Motor neuron (in vitro differentiated cells): ENCODE measurements at regions of chr3 and their contacts with region 1.

Region 1: GRCh38 chr3:18988614-18989229 is 159.6 kb upstream of the KCNH8 start:
- ATAC-seq: peak in 6 of 8 experiments; percentile 35 to 63 (median 48)
- H3K4me3 ChIP-seq: no peak overlapping the region
- H3K27ac ChIP-seq: no peak overlapping the region
- H3K4me1 ChIP-seq: peaks cover 0 to 14% of the 10 kb centered on the region in 2 donors

Region 2: DNA sequence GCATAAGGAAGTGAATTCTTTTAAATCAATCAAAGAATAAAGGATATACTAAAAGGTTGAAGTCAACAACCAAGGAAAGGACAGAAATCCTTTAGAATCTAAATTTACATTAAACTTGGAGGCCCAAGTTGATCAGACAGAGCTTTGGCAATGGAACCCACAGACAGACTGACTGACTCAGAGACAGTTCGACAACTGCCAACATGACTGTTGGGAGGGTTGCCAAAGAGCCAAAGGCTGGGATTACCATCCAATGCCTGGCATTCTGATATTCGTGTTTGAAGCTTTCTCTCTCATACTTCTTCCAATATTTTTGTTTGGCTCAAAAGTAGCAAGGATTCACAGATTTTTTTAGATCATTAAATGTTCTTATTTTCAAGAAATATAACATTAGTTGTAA is 1697.8 kb before region 1 on chr3:
- in situ Hi-C with region 1: loop called in 1 of 9 experiments (anchors 25 kb)
- ATAC-seq: no peak
- H3K4me3 ChIP-seq: no peak overlapping the region
- H3K27ac ChIP-seq: no peak overlapping the region
- H3K4me1 ChIP-seq: no peaks in the 10 kb centered on the region

Region 3: DNA sequence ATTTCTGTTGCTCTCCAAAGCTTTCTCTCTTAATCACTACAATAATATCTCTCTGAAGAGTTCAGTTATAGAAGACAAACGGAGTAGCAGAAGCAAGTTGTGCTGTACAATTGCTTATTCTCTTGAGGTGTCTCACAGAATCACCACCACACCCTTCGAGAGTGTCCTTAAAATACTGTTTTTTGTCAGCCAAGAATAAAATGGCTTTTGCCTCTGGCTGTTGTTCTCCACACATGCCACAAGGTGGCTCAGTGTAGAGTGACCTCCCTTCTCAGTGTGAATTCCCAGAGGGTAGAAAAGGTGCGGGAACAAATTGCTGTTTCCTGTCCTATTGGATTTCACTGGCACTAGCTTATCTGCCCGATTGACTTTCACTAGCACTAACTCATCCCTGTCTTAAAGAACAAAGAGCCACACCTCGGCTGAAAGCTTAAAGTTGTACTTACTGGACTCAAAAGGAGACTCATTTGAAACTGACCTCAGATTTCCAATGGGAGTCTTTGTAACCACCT is 429.3 kb before region 1 on chr3:
- in situ Hi-C with region 1: loop called in 2 of 9 experiments (anchors 25 kb)
- ATAC-seq: peak in 4 of 8 experiments; percentile 28 to 75 (median 62)
- H3K4me3 ChIP-seq: no peak overlapping the region
- H3K27ac ChIP-seq: no peak overlapping the region
- H3K4me1 ChIP-seq: no peaks in the 10 kb centered on the region